T-cell (primary cell): ENCODE measurements at regions of chr19 and their contacts with region 1.

Region 1: GRCh38 chr19:8481201-8481600 is 21.2 kb downstream of the PRAM1 start:
- DNase-seq: peak in 1 of 35 experiments; percentile 27
- ATAC-seq: peak in 2 of 4 experiments; percentile 11 to 52
- H3K4me3 ChIP-seq: peak overlapping the region in 1 of 2 donors; percentile 30
- H3K4me3 Mint-ChIP-seq: peak overlapping the region in 2 of 3 donors; percentile 13 to 67
- H3K27ac ChIP-seq: peak overlapping the region; percentile 23
- H3K27ac Mint-ChIP-seq: peak overlapping the region; percentile 59 to 78
- H3K4me1 ChIP-seq: peaks cover 18 to 60% of the 10 kb centered on the region in 2 experiments
- H3K4me1 Mint-ChIP-seq: peaks cover 62 to 65% (median 64%) of the 10 kb centered on the region in 3 donors
- H3K27me3 ChIP-seq: no peaks in the 10 kb centered on the region
- H3K27me3 Mint-ChIP-seq: no peaks in the 10 kb centered on the region

Region 2: DNA sequence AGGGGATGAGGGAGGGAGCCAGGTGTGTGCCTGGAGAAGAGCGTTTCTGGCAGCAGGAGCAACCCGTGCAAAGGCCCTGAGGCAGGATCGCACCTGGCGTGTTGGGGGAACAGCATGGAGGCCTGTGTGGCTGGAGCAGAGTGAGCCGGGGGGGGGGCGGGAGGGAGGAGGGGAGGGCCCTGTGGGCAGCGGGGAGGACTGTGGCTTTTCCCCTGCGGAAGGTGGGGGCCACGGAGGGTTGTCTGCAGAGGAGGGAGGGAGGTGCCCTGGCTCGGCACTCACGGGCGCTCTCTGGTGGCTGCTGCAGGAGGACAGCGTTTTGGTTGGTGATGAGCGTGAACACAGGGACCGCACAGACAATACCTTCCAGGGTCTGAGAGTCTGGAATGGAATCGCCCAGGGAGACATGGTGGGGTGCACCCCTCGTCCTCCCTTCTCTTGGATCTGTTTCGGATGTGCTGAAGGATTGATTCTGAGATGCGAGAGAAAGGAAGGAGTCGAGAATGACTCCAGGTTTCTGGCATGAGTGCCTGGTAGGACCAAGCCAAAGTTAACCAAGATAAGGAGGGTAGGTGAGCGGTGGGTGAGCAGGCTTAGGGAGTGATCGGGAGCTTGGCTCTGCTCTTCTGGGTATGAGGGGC is 84.5 kb before region 1 on chr19:
- CTCF ChIA-PET with region 1: no interaction called
- POLR2A ChIA-PET with region 1: no interaction called
- DNase-seq: peak; percentile 22 to 84 (median 63)
- ATAC-seq: peak; percentile 59 to 85 (median 68)
- H3K4me3 ChIP-seq: no peak overlapping the region
- H3K4me3 Mint-ChIP-seq: peak overlapping the region in 1 of 3 donors; percentile 29
- H3K27ac ChIP-seq: no peak overlapping the region
- H3K27ac Mint-ChIP-seq: peak overlapping the region in 1 of 2 donors; percentile 49
- H3K4me1 ChIP-seq: peaks cover 0 to 38% of the 10 kb centered on the region in 2 experiments
- H3K4me1 Mint-ChIP-seq: peaks cover 27 to 42% (median 29%) of the 10 kb centered on the region in 3 donors
- H3K27me3 ChIP-seq: no peaks in the 10 kb centered on the region
- H3K27me3 Mint-ChIP-seq: no peaks in the 10 kb centered on the region

Region 3: DNA sequence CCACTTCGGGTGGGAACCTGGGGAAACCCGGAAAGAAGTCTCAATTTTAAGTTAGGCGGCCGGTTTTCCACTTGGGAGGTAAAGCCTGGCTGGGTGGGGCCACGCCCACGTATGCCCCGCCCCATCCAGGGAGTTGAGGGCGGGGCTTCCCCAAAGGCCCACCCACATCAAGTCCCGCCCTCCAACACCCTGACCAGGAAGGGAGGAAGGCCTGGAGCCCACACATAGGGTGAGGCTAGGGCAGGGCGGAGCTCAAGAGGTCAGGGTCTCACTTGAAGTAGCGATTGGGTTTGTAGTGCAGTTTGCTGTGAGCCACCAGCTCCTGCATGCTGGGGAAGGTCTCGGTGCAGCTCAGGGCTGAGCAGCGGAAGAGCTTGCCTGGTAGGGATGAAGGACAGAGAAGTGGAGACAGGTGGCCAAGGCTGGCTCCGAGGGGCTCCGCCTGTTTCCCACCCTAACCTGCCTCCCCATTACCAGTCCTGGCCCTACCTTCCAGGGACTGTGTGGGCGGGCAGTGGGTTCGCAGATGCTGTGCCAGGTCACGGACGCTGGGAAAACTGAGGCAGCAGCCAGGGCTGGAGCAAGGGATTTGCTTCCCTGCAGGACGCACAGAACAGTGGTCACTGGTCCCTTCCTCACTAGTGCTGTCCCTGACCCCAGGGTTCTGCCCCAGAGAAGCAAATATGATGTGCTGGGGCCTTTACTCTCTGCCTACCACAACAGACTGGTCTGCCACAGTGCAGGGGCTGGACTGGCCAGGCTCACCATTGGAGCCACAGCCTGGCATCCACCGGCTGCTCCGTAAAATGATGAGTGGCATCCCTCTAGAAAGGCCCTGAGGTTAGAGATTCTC is 31.1 kb after region 1 on chr19:
- CTCF ChIA-PET with region 1: interaction called in 1 of 2 experiments, 6 read pairs
- POLR2A ChIA-PET with region 1: interaction called in 1 of 2 experiments, 10 read pairs
- DNase-seq: peak in 1 of 35 experiments; percentile 26
- ATAC-seq: no peak
- H3K4me3 ChIP-seq: no peak overlapping the region
- H3K4me3 Mint-ChIP-seq: peak overlapping the region in 2 of 3 donors; percentile 49 to 52
- H3K27ac ChIP-seq: peak overlapping the region; percentile 85
- H3K27ac Mint-ChIP-seq: peak overlapping the region; percentile 86 to 87
- H3K4me1 ChIP-seq: peaks cover 30 to 57% of the 10 kb centered on the region in 2 experiments
- H3K4me1 Mint-ChIP-seq: peaks cover 38 to 46% (median 41%) of the 10 kb centered on the region in 3 donors
- H3K27me3 ChIP-seq: no peaks in the 10 kb centered on the region
- H3K27me3 Mint-ChIP-seq: no peaks in the 10 kb centered on the region

Region 4: GRCh38 chr19:8552810-8553209 is 71.6 kb after region 1 on chr19:
- CTCF ChIA-PET with region 1: no interaction called
- POLR2A ChIA-PET with region 1: no interaction called
- DNase-seq: no peak
- ATAC-seq: no peak
- H3K4me3 ChIP-seq: no peak overlapping the region
- H3K4me3 Mint-ChIP-seq: no peak overlapping the region
- H3K27ac ChIP-seq: no peak overlapping the region
- H3K27ac Mint-ChIP-seq: peak overlapping the region; percentile 12 to 49
- H3K4me1 ChIP-seq: peaks cover 0 to 10% of the 10 kb centered on the region in 2 experiments
- H3K4me1 Mint-ChIP-seq: peaks cover 10 to 15% (median 11%) of the 10 kb centered on the region in 3 donors
- H3K27me3 ChIP-seq: no peaks in the 10 kb centered on the region
- H3K27me3 Mint-ChIP-seq: no peaks in the 10 kb centered on the region